B cell (primary cell): ENCODE measurements at regions of chr17 and their contacts with region 1.

Region 1: DNA sequence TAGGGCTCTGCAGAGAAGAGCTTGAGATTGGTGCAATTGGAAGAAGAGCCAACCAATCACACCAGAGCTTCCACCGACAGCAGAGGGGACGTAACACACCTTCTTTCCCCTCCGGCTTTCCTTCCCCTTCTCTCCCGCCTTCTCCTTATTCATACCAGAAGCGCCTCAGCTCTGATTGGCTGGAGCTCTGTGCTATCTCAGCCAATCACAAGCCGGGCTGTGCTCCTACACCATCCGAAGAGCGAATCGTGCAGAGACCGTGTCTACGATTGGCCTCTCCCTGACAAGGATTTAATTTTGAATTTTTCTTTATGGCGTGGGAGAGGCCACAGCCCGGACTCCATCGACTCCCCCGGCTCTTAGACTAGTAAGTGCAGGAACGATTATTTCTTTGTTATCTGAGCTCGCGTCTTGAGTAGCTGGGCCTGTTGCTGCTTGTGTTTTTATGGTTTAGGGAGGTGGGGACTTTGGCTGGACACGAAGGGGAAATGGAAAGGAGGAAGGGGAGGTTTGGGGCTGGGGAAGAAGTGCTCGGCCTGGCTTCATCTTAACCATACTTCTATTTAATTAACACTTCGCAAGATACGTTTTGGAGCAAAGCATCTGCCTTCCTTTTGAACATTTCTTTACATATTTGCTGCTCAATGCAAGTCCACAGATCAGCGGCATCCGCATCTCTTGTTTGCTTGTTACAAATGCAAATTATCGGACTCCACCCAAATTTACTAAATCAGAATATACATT is at the start of gene PRR11:
- DNase-seq: no peak
- ATAC-seq: peak; percentile 85
- H3K4me3 ChIP-seq: peak within 1 kb of the TSS; percentile 62 to 98 (median 96)
- H3K4me3 Mint-ChIP-seq: no peak within 1 kb of the TSS
- H3K27ac ChIP-seq: peak within 1 kb of the TSS; percentile 50 to 79
- H3K27ac Mint-ChIP-seq: no peak within 1 kb of the TSS
- H3K4me1 ChIP-seq: peaks cover 9 to 15% of the 10 kb centered on the region in 2 donors
- H3K4me1 Mint-ChIP-seq: peaks cover 13% of the 10 kb centered on the region
- H3K27me3 ChIP-seq: no peaks in the 10 kb centered on the region
- H3K27me3 Mint-ChIP-seq: no peaks in the 10 kb centered on the region
- CTCF ChIP-seq: no peak
- total RNA-seq, gene PRR11: 0.75 and 1.5 TPM in 2 replicates

Region 2: DNA sequence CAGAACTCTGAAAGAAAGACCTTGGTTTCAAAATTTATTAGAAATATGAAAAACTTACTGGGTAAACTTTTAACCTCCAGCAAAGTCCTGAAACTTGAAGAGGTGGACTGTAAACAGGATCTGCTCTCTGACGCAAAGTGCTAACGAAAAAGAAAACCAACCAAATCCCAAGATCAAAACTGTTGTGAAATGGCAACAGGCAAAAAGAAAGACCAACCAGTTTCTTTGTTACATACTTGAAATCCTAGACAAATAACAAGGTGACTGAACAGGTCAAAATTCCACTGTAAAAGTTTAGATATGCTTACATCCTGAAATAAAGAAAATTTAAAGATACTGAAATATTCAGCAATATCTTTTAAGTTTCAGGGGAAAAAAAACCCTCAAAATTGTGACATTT is 93.1 kb before region 1 on chr17:
- CTCF ChIA-PET with region 1: no interaction called
- POLR2A ChIA-PET with region 1: no interaction called
- intact Hi-C with region 1: no loop called
- DNase-seq: no peak
- ATAC-seq: no peak
- H3K4me3 ChIP-seq: no peak overlapping the region
- H3K4me3 Mint-ChIP-seq: no peak overlapping the region
- H3K27ac ChIP-seq: no peak overlapping the region
- H3K27ac Mint-ChIP-seq: no peak overlapping the region
- H3K4me1 ChIP-seq: no peaks in the 10 kb centered on the region
- H3K4me1 Mint-ChIP-seq: no peaks in the 10 kb centered on the region
- H3K27me3 ChIP-seq: no peaks in the 10 kb centered on the region
- H3K27me3 Mint-ChIP-seq: no peaks in the 10 kb centered on the region
- CTCF ChIP-seq: no peak

Region 3: GRCh38 chr17:59106463-59107305 is 48.9 kb before region 1 on chr17 and contains the start of gene TRIM37:
- CTCF ChIA-PET with region 1: interaction called, 10 read pairs
- POLR2A ChIA-PET with region 1: interaction called, 6 read pairs
- intact Hi-C with region 1: loop called (anchors 1 kb)
- DNase-seq: peak; percentile 100
- ATAC-seq: peak; percentile 96
- H3K4me3 ChIP-seq: peak within 1 kb of the TSS; percentile 56 to 92 (median 83)
- H3K4me3 Mint-ChIP-seq: peak within 1 kb of the TSS; percentile 94
- H3K27ac ChIP-seq: peak within 1 kb of the TSS; percentile 86 to 88
- H3K27ac Mint-ChIP-seq: peak within 1 kb of the TSS; percentile 93
- H3K4me1 ChIP-seq: peaks cover 11 to 12% of the 10 kb centered on the region in 2 donors
- H3K4me1 Mint-ChIP-seq: peaks cover 27% of the 10 kb centered on the region
- H3K27me3 ChIP-seq: no peaks in the 10 kb centered on the region
- H3K27me3 Mint-ChIP-seq: no peaks in the 10 kb centered on the region
- CTCF ChIP-seq: no peak
- total RNA-seq, gene TRIM37: 28.3 and 33.8 TPM in 2 replicates

Region 4: DNA sequence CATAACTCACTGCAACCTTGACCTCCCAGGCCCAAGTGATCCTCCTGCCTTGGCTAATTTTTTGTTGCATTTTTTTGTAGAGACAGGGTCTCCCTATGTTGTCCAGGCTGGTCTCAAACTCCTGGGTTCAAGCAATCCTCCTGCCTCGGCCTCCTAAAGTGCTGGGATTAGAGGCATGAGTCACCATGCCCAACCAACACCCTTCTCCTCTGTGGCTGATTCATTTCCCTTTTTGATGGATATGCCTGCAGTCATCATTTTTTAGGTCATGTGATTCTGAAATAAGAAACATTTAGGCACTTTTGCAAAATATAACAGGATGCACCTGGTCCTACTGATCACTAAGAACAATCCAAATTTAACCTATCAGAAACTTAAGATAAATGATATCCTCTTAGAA is 131.8 kb after region 1 on chr17:
- CTCF ChIA-PET with region 1: no interaction called
- POLR2A ChIA-PET with region 1: no interaction called
- intact Hi-C with region 1: no loop called
- DNase-seq: no peak
- ATAC-seq: no peak
- H3K4me3 ChIP-seq: no peak overlapping the region
- H3K4me3 Mint-ChIP-seq: no peak overlapping the region
- H3K27ac ChIP-seq: no peak overlapping the region
- H3K27ac Mint-ChIP-seq: no peak overlapping the region
- H3K4me1 ChIP-seq: peaks cover 0 to 11% of the 10 kb centered on the region in 2 donors
- H3K4me1 Mint-ChIP-seq: peaks cover 12% of the 10 kb centered on the region
- H3K27me3 ChIP-seq: no peaks in the 10 kb centered on the region
- H3K27me3 Mint-ChIP-seq: no peaks in the 10 kb centered on the region
- CTCF ChIP-seq: no peak

Region 5: DNA sequence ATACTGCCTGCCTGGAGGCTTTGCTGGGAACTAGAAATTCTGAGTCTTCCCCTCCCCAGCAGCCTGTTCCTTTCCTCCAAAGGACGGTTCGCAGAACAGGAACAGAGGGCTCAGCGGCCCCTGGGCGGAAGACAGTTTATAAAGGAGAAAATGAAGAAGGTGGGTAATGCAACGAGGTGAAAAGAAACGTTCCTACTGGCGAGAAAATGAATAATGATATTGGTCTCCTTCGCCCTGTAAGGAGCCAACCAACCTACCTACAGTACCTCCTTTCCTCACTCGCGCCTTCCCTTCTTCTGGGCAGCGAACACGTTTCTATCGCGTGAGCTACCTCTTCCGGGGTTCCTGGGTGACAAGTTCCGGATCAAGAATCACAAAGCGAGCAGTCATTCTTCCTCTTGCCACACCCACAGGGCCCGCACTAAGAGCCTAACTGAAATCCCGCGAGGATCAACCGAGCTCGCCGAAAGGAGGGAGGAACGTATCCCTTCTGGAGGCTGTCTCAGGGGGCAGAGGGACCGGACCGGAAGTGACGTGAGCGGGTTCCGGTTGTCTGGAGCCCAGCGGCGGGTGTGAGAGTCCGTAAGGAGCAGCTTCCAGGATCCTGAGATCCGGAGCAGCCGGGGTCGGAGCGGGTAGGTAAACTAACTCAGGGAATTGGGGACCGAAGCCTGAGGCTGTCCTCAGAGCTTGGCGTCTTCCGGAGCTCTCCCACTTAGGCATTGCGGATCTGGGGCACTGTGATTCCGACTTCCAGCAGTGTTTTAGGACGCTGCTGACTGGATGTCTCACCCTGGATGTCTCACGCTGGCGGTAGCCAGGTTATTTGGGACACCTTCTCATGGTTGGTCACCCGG is 551.7 kb after region 1 on chr17 and contains the starts of genes PTRH2 and VMP1:
- CTCF ChIA-PET with region 1: no interaction called
- POLR2A ChIA-PET with region 1: no interaction called
- intact Hi-C with region 1: loop called (anchors 5 kb)
- DNase-seq: peak; percentile 95
- ATAC-seq: peak; percentile 90
- H3K4me3 ChIP-seq: peak within 1 kb of the TSS; percentile 72 to 98 (median 94)
- H3K4me3 Mint-ChIP-seq: peak within 1 kb of the TSS; percentile 99
- H3K27ac ChIP-seq: peak within 1 kb of the TSS; percentile 86 to 98
- H3K27ac Mint-ChIP-seq: peak within 1 kb of the TSS; percentile 97
- H3K4me1 ChIP-seq: peaks cover 23 to 24% of the 10 kb centered on the region in 2 donors
- H3K4me1 Mint-ChIP-seq: peaks cover 55% of the 10 kb centered on the region
- H3K27me3 ChIP-seq: no peaks in the 10 kb centered on the region
- H3K27me3 Mint-ChIP-seq: no peaks in the 10 kb centered on the region
- CTCF ChIP-seq: no peak
- total RNA-seq, gene PTRH2: 17.8 and 22.7 TPM in 2 replicates
- total RNA-seq, gene VMP1: 78.5 and 83.5 TPM in 2 replicates